AG04449 (cell line): ENCODE measurements at regions of chr12 and their contacts with region 1.

Region 1: DNA sequence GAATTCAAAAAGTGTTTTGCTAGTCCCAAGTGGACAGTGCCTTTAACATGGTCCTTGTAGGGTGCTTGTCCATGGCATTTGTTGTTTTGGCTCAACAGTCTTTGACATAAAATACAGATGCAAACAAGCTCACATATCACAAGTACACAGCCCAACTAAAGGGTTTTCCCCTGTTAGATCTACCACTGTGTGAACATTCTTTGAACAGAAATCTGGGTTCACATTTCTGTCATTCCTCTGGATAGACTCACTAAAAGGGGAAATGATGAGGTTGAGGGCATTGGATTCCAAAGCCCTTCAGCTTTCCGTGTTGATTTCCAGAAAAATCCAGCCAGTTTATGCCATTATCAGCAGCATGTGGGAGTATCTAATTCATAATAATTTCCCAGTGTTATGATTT is 54.1 kb downstream of the EP400 start:
- DNase-seq: peak; percentile 61
- H3K4me3 ChIP-seq: no peak overlapping the region
- CTCF ChIP-seq: no peak

Region 2: DNA sequence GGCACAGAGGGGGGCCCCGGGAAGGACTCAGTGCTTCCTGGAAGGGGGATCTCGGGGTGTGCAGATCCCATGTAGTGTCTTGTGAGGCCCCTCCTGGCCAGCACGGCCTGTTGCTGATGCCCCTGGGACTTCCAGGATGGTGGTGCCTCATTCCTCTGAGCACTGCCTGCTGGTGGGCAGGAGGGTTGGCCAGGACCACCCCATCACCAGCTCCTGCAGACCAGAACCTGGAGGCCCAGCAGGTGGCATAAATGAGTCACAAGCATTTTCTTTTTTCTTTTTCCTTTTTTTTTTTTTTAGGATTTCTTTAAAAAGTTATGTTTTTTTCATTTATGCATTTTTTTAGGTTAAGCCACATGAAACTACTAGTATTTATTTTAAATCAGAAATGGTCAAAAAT is 167.7 kb before region 1 on chr12:
- CTCF ChIA-PET with region 1: interaction called, 10 read pairs
- POLR2A ChIA-PET with region 1: no interaction called
- DNase-seq: no peak
- H3K4me3 ChIP-seq: no peak overlapping the region
- CTCF ChIP-seq: peak; percentile 37

Region 3: DNA sequence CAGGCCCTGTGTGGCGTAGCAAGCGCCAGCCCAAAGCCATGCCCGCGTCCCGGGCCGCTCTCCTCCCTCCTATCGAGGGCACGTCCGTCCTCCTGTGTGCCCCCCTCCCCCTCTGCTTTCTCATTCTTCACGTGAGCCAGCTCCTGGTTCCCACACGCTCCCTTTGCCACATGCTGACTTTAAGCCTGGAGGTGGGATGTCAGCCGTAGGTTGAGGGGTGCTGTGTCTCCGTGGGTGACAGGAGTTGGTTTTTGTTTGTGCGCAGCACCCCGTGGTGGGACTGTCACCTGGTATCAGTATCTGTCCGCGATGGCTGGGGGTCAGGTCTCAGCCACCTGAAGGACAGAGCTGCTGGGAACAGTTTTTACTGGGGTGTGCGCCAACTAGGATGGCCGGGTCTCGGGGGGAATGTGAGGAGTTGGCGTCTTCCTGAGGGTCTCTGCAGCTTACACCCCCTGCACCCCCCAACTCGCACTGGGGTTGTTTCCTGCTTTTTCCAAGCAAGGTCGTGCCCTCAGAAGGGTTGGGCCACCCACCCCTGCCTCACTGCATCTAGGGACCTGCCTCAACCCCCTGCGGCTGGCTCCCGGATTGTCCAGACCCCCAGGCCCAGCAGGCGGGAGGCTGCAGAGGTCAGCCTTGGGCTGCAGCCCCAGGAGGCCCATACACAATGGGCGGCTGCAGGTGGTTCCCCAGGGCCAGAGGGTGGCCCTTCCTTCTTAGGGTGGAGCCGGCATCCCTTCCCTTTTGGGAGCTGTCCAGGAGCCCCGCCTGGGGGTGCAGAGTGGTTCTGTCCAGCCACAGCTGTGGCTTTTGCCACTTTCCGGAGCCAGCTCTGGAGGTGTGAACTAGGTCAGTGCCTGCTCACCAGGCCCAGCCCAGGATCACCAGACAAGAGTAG is 102.2 kb before region 1 on chr12:
- CTCF ChIA-PET with region 1: no interaction called
- POLR2A ChIA-PET with region 1: no interaction called
- DNase-seq: no peak
- H3K4me3 ChIP-seq: no peak overlapping the region
- CTCF ChIP-seq: no peak

Region 4: DNA sequence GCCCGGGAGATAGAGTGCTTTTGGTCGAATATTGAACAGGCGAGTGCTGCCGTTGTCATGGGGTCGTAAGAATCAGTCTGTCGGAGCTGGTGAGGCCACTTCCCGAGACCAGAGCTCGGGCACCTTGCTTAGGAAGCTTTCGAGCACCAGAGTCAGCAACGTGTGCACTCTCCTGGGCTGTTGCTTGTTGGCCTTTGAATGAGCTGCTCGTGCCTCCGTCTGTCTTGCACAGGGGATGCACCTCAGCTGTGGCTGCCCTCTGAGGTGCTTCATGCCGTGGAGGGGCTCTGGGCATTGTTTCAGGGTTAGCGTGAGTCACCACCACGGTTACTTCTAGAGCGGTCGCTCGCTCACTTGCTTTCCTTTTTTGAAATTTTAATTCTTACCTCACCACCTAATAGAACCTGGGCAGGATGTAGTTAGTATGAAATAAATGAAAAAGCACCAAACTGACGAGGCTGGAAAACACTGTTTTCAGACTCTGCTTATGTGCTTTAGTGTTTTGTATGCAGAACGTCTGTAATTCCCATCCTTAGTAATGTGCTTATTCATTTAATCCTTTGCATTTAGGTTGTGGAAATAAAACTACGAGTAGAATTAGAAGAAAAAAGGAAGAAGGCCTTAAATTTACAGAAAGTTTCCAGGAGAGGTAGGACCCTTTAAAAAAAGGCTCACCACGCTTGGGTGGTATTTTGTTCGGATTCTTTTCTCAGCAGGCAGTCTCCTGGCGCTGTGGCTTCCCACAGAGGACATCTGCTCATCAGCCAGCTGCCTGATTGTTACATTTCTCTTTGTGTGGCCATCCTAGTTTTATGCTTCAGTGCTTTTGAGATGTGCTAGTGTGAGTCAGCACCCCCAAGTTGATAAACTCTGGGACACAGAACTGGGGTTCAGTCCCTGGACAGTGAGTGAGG is 13.5 kb before region 1 on chr12:
- CTCF ChIA-PET with region 1: interaction called, 29 read pairs
- POLR2A ChIA-PET with region 1: no interaction called
- DNase-seq: no peak
- H3K4me3 ChIP-seq: no peak overlapping the region
- CTCF ChIP-seq: no peak